Ascending aorta (tissue), 2 donors: ENCODE measurements at regions of chr17 and their contacts with region 1.

Region 1: GRCh38 chr17:41870627-41871026 is 5.4 kb upstream of the KLHL11 start:
- DNase-seq: no peak
- H3K4me3 ChIP-seq: no peak overlapping the region
- H3K27ac ChIP-seq: no peak overlapping the region
- H3K4me1 ChIP-seq: no peaks in the 10 kb centered on the region
- H3K27me3 ChIP-seq: no peaks in the 10 kb centered on the region
- CTCF ChIP-seq: no peak

Region 2: GRCh38 chr17:41738077-41738735 is 132.4 kb before region 1 on chr17:
- intact Hi-C with region 1: loop called (anchors 10 kb)
- DNase-seq: peak; percentile 19 to 85
- H3K4me3 ChIP-seq: no peak overlapping the region
- H3K27ac ChIP-seq: no peak overlapping the region
- H3K4me1 ChIP-seq: peaks cover 6 to 16% of the 10 kb centered on the region in 2 donors
- H3K27me3 ChIP-seq: peaks cover 16% of the 10 kb centered on the region
- CTCF ChIP-seq: peak; percentile 95 to 98 (median 95)